ENCODE measurements at regions of chr5 and their contacts with region 1.

Region 1: GRCh38 chr5:14351845-14352712 is 208.9 kb downstream of the TRIO start:
- DNase-seq: peak; percentile 74
- ATAC-seq: peak; percentile 97
- H3K4me3 Mint-ChIP-seq: no peak overlapping the region
- H3K27ac Mint-ChIP-seq: no peak overlapping the region
- H3K4me1 Mint-ChIP-seq: peaks cover 10% of the 10 kb centered on the region
- H3K27me3 Mint-ChIP-seq: peaks cover 8% of the 10 kb centered on the region

Region 2: DNA sequence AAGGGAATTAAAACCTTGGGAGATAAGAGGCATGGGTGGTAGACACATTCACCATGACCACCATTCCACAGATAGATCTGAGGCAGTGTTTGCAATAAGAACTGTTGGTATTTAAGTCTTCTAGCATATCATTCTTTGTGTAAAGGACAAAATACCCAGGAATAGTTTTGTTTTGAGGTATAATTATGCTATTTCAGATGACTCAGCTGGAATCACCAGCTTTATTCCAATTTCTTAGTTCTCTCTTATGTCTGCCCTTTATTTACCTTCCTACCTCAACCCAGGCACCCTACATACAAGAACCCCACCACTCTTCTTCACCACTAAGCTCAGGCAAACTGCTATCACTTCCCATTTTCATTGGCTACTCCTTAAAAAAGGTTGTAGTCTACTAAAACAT is 303.6 kb before region 1 on chr5:
- CTCF ChIA-PET with region 1: no interaction called
- POLR2A ChIA-PET with region 1: no interaction called
- DNase-seq: no peak
- ATAC-seq: no peak
- H3K4me3 Mint-ChIP-seq: no peak overlapping the region
- H3K27ac Mint-ChIP-seq: no peak overlapping the region
- H3K4me1 Mint-ChIP-seq: no peaks in the 10 kb centered on the region
- H3K27me3 Mint-ChIP-seq: no peaks in the 10 kb centered on the region

Region 3: DNA sequence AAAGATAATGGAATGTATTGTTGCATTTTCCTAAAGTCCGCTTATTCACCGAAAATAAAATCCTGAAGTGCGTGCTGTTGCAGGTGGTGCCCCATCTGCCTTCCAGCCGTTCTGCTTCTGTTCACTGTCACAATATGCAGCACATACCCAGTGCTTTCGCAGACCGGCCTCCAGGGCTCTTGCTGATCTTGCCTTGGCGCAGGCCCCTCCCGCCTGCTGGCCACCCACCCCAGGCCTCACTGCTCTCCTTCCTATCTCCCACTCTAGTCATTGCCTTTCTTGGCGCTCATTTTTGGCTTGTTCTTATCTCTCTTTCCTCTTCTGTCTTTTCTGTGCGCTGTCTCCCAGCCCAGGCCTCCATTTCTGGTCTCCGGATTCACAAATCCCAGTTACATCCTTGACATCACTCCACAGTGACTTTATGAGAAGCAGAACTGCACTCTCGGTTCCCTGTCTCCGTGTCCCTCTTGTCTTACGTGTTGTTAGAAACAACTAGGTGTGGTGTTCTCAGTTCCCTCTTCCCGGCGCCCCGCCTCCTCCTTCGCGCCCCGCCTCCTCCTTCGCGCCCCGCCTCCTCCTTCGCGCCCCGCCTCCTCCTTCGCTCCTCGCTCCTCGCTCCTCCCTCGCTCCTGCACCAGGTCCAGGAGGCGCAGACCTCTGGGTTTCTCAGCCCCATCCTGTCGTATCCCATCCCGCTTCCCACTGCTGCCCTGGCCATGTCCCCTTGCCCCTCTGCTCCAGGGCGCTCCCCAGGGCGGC is 27.8 kb after region 1 on chr5:
- CTCF ChIA-PET with region 1: no interaction called
- POLR2A ChIA-PET with region 1: no interaction called
- DNase-seq: no peak
- ATAC-seq: no peak
- H3K4me3 Mint-ChIP-seq: no peak overlapping the region
- H3K27ac Mint-ChIP-seq: no peak overlapping the region
- H3K4me1 Mint-ChIP-seq: peaks cover 6% of the 10 kb centered on the region
- H3K27me3 Mint-ChIP-seq: peaks cover 3% of the 10 kb centered on the region

Region 4: DNA sequence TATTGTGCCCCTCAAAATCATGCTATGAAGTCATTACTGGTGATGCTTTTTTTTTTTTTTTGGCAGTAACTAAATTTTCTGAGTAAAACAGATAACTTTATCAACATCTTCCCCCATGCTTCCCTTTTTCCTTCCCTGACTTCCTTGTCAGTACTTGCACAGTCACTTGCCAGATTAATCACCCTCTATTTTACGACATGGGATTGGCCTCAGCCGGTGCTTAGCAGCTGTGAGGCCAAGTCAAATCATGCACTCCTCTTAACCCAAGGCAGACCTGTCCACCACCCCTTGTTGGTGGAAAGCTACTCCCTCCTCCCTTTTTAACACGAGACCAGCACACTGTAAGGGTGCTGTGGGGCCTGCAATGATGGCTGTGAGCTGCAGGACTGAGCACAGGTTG is 111.5 kb after region 1 on chr5:
- CTCF ChIA-PET with region 1: no interaction called
- POLR2A ChIA-PET with region 1: no interaction called
- DNase-seq: no peak
- ATAC-seq: no peak
- H3K4me3 Mint-ChIP-seq: no peak overlapping the region
- H3K27ac Mint-ChIP-seq: no peak overlapping the region
- H3K4me1 Mint-ChIP-seq: no peaks in the 10 kb centered on the region
- H3K27me3 Mint-ChIP-seq: no peaks in the 10 kb centered on the region

Region 5: GRCh38 chr5:14655146-14655741 is 303.2 kb after region 1 on chr5:
- CTCF ChIA-PET with region 1: interaction called, 59 read pairs
- POLR2A ChIA-PET with region 1: no interaction called
- DNase-seq: no peak
- ATAC-seq: peak; percentile 53
- H3K4me3 Mint-ChIP-seq: no peak overlapping the region
- H3K27ac Mint-ChIP-seq: no peak overlapping the region
- H3K4me1 Mint-ChIP-seq: peaks cover 21% of the 10 kb centered on the region
- H3K27me3 Mint-ChIP-seq: peaks cover 12% of the 10 kb centered on the region